Natural killer cell (primary cell): ENCODE measurements at regions of chr2 and their contacts with region 1.

Region 1: DNA sequence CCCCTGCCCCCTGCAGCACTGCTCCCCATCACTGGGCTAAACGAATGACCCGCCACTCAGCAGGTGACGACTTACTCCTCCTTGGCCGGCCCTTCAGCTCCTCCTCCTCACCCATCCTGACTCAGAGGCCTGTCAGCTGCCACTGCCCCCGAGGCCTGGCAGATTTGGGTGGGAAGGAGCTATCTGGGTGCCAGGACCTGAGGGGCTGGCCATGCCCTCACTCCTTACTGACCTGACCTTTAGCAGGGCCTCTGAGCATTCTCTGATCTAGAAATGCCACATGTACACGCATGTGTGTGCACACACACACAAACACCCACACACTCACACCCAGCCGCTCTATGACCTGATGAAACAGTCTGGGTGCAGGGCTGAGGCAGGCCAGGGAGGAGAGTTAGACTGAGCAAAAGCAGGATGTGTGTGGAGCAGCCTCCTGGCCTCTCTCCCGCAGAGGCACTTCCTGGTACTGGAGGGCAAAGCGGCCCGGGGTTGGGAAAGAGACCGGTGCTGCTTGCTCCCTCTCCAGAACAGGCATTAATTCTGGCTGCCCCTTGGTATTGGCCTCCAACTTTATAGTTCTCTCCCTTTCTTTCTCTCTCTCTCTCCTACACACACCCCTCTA is 68.0 kb downstream of the ZFP36L2 start:
- DNase-seq: peak; percentile 39 to 80
- ATAC-seq: peak; percentile 33 to 53 (median 41)
- H3K4me3 ChIP-seq: no peak overlapping the region
- H3K4me3 Mint-ChIP-seq: peak overlapping the region; percentile 64
- H3K27ac ChIP-seq: peak overlapping the region; percentile 97
- H3K27ac Mint-ChIP-seq: peak overlapping the region; percentile 95 to 97
- H3K4me1 ChIP-seq: peaks cover 76% of the 10 kb centered on the region
- H3K4me1 Mint-ChIP-seq: peaks cover 27 to 55% of the 10 kb centered on the region in 2 donors
- H3K27me3 ChIP-seq: no peaks in the 10 kb centered on the region
- H3K27me3 Mint-ChIP-seq: no peaks in the 10 kb centered on the region
- CTCF ChIP-seq: no peak

Region 2: GRCh38 chr2:42804338-42804737 is 354.0 kb before region 1 on chr2:
- intact Hi-C with region 1: no loop called
- DNase-seq: no peak
- ATAC-seq: peak in 1 of 3 donors; percentile 58
- H3K4me3 ChIP-seq: no peak overlapping the region
- H3K4me3 Mint-ChIP-seq: no peak overlapping the region
- H3K27ac ChIP-seq: no peak overlapping the region
- H3K27ac Mint-ChIP-seq: no peak overlapping the region
- H3K4me1 ChIP-seq: peaks cover 4% of the 10 kb centered on the region
- H3K4me1 Mint-ChIP-seq: peaks cover 0 to 5% of the 10 kb centered on the region in 2 donors
- H3K27me3 ChIP-seq: no peaks in the 10 kb centered on the region
- H3K27me3 Mint-ChIP-seq: peaks cover 12 to 33% of the 10 kb centered on the region in 2 donors
- CTCF ChIP-seq: no peak

Region 3: GRCh38 chr2:43139996-43140621 is 18.3 kb before region 1 on chr2:
- intact Hi-C with region 1: loop called (anchors 1 kb)
- DNase-seq: peak in 1 of 2 donors; percentile 80
- ATAC-seq: peak; percentile 52 to 72 (median 65)
- H3K4me3 ChIP-seq: no peak overlapping the region
- H3K4me3 Mint-ChIP-seq: peak overlapping the region; percentile 87
- H3K27ac ChIP-seq: peak overlapping the region; percentile 97
- H3K27ac Mint-ChIP-seq: peak overlapping the region; percentile 87 to 96
- H3K4me1 ChIP-seq: peaks cover 86% of the 10 kb centered on the region
- H3K4me1 Mint-ChIP-seq: peaks cover 61 to 74% of the 10 kb centered on the region in 2 donors
- H3K27me3 ChIP-seq: no peaks in the 10 kb centered on the region
- H3K27me3 Mint-ChIP-seq: no peaks in the 10 kb centered on the region
- CTCF ChIP-seq: no peak

Region 4: DNA sequence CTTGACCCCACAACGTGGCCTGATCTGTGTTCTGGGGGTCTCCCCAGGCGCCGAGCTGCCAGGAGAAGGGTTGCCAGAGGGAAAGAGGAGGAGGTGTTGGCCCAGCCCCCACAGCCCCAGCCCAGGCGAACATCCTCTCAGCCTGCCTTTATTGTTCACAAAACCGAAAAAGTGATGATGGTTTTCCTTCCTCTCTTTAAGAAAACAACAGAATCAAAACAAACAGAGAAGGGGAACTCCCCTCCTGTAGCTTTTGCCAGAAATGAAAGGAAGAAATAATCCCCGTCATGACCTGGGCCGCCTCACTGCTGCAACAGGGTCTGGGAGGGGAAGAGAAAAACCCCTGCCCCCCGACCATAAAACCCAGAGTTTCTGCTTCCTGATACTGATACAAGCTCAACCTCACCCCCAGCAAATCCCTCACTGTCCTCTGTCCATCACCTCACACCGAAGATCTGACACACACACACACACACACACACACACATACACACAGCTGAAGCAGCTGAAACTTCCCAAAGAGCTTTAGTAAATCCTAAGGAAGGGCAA is 16.1 kb after region 1 on chr2:
- intact Hi-C with region 1: loop called (anchors 1 kb)
- DNase-seq: peak; percentile 59 to 92
- ATAC-seq: peak; percentile 69 to 83 (median 82)
- H3K4me3 ChIP-seq: peak overlapping the region; percentile 8
- H3K4me3 Mint-ChIP-seq: peak overlapping the region; percentile 88
- H3K27ac ChIP-seq: peak overlapping the region; percentile 94
- H3K27ac Mint-ChIP-seq: peak overlapping the region; percentile 99
- H3K4me1 ChIP-seq: peaks cover 96% of the 10 kb centered on the region
- H3K4me1 Mint-ChIP-seq: peaks cover 45 to 73% of the 10 kb centered on the region in 2 donors
- H3K27me3 ChIP-seq: no peaks in the 10 kb centered on the region
- H3K27me3 Mint-ChIP-seq: no peaks in the 10 kb centered on the region
- CTCF ChIP-seq: no peak

Region 5: DNA sequence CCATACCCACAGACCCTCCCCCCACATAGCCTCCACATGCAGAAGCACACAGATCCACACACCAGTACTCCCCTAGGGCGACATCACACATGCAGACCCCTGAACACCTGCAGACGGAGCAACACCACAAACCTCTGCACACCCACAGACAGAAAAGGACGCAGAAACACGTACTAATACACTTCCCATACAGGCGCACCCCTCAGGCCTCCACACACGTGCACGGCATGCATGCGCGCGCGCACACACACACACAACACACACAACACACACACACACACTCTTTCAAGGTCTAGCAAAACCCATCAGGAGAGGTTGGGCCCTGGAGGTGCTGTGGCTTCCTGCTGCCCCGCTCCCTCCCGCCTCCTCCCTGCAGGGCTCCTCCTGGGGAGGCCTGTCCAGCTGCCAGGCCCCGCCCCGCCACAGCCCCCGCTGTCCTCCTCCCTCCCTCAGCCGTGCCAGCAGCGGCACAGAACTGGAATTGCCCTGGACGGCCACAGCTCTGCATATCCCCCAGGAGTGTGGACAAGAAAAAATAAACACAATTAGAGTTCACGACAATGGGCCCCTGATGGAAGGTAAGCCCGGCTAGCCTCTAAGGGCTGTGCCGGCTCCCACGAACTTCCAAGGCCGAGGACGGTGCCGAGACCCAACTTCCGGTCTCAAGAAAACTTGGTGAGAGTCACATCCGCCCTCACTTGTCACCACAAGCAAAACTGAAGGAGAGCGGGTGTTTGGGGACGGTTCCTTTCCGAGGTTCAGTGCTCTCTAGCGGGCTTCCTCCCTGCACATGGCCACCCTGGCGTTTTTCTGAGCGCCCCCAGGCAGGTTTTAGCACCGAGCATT is 61.2 kb after region 1 on chr2:
- intact Hi-C with region 1: loop called (anchors 1 kb)
- DNase-seq: peak; percentile 73 to 93
- ATAC-seq: peak; percentile 39 to 70 (median 57)
- H3K4me3 ChIP-seq: peak overlapping the region; percentile 92
- H3K4me3 Mint-ChIP-seq: peak overlapping the region; percentile 82
- H3K27ac ChIP-seq: peak overlapping the region; percentile 96
- H3K27ac Mint-ChIP-seq: peak overlapping the region; percentile 90 to 99
- H3K4me1 ChIP-seq: peaks cover 58% of the 10 kb centered on the region
- H3K4me1 Mint-ChIP-seq: peaks cover 66 to 68% of the 10 kb centered on the region in 2 donors
- H3K27me3 ChIP-seq: no peaks in the 10 kb centered on the region
- H3K27me3 Mint-ChIP-seq: peaks cover 0 to 4% of the 10 kb centered on the region in 2 donors
- CTCF ChIP-seq: no peak